CD4-positive, alpha-beta memory T cell (primary cell): ENCODE measurements at regions of chr12 and their contacts with region 1.

Region 1: DNA sequence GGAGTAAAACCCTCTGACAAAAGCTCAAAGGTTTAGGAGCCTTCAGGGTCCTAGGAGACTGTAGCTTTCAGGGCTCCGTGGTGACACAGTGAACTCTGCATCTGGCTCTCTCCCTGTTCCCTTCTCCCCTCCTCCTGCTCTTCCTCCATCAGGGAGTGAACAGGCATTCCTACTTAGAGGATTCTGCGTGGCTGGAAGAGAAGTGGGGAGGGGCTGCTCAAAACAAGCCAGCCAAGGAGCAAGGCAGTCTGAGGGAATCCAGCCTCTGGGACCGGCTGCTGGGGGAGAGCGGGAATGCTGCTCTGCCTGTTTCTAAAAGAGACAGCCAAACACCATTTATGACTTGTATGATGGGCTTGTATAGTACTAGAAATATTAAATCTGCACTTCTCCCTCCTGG is 49.5 kb downstream of the RBMS2 start:
- DNase-seq: no peak
- H3K4me3 ChIP-seq: no peak overlapping the region
- H3K4me3 Mint-ChIP-seq: no peak overlapping the region
- H3K27ac ChIP-seq: no peak overlapping the region
- H3K27ac Mint-ChIP-seq: peak overlapping the region in 1 of 7 donors; percentile 24
- H3K4me1 ChIP-seq: peaks cover 16% of the 10 kb centered on the region
- H3K4me1 Mint-ChIP-seq: peaks cover 9 to 12% (median 9%) of the 10 kb centered on the region in 4 donors
- H3K27me3 ChIP-seq: no peaks in the 10 kb centered on the region
- H3K27me3 Mint-ChIP-seq: peaks cover 0 to 2% of the 10 kb centered on the region in 2 donors

Region 2: DNA sequence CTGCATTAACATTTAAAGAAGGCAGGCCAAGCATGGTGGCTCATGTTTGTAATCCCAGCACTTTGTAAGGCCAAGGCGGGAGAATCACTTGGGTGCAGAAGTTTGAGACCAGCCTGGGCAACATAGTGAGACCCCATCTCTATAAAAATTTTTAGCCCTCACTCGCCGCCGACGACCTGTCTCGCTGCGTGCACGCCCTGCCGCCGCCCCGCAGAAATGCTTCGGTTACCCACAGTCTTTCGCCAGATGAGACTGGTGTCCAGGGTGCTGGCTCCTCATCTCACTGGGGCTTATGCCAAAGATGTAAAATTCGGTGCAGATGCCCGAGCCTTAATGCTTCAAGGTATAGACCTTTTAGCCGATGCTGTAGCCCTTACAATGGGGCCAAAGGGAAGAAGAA is 60.3 kb before region 1 on chr12:
- CTCF ChIA-PET with region 1: interaction called, 75 read pairs
- POLR2A ChIA-PET with region 1: no interaction called
- intact Hi-C with region 1: loop called (anchors 1 kb)
- DNase-seq: no peak
- H3K4me3 ChIP-seq: no peak overlapping the region
- H3K4me3 Mint-ChIP-seq: no peak overlapping the region
- H3K27ac ChIP-seq: no peak overlapping the region
- H3K27ac Mint-ChIP-seq: no peak overlapping the region
- H3K4me1 ChIP-seq: no peaks in the 10 kb centered on the region
- H3K4me1 Mint-ChIP-seq: peaks cover 0 to 4% (median 3%) of the 10 kb centered on the region in 4 donors
- H3K27me3 ChIP-seq: no peaks in the 10 kb centered on the region
- H3K27me3 Mint-ChIP-seq: peaks cover 9% of the 10 kb centered on the region in 2 donors

Region 3: GRCh38 chr12:56521590-56522371 is 49.3 kb before region 1 on chr12 and contains the start of gene RBMS2:
- CTCF ChIA-PET with region 1: interaction called, 19 read pairs
- POLR2A ChIA-PET with region 1: no interaction called
- intact Hi-C with region 1: no loop called
- DNase-seq: peak; percentile 37 to 69 (median 49)
- H3K4me3 ChIP-seq: peak within 1 kb of the TSS in 1 of 2 donors; percentile 9
- H3K4me3 Mint-ChIP-seq: peak within 1 kb of the TSS; percentile 87 to 95 (median 89)
- H3K27ac ChIP-seq: peak within 1 kb of the TSS; percentile 18
- H3K27ac Mint-ChIP-seq: peak within 1 kb of the TSS; percentile 78 to 95 (median 90)
- H3K4me1 ChIP-seq: peaks cover 14% of the 10 kb centered on the region
- H3K4me1 Mint-ChIP-seq: peaks cover 14 to 28% (median 22%) of the 10 kb centered on the region in 4 donors
- H3K27me3 ChIP-seq: no peaks in the 10 kb centered on the region
- H3K27me3 Mint-ChIP-seq: peaks cover 0 to 3% of the 10 kb centered on the region in 2 donors
- total RNA-seq, gene RBMS2: 1.9 to 2.0 TPM

Region 4: GRCh38 chr12:56581418-56582145 is 10.5 kb after region 1 on chr12:
- CTCF ChIA-PET with region 1: interaction called, 11 read pairs
- POLR2A ChIA-PET with region 1: interaction called, 3 read pairs
- intact Hi-C with region 1: no loop called
- DNase-seq: peak in 1 of 5 donors; percentile 53
- H3K4me3 ChIP-seq: no peak overlapping the region
- H3K4me3 Mint-ChIP-seq: peak overlapping the region in 2 of 8 donors; percentile 17 to 69
- H3K27ac ChIP-seq: no peak overlapping the region
- H3K27ac Mint-ChIP-seq: peak overlapping the region; percentile 28 to 79 (median 69)
- H3K4me1 ChIP-seq: peaks cover 16% of the 10 kb centered on the region
- H3K4me1 Mint-ChIP-seq: peaks cover 10 to 18% (median 14%) of the 10 kb centered on the region in 4 donors
- H3K27me3 ChIP-seq: no peaks in the 10 kb centered on the region
- H3K27me3 Mint-ChIP-seq: no peaks in the 10 kb centered on the region